Head of caudate nucleus (tissue), 42 donors: ENCODE measurements at regions of chr1 and their contacts with region 1.

Region 1: GRCh38 chr1:179175011-179175841 is 54.3 kb downstream of the ABL2 start:
- DNase-seq: peak in 39 of 42 donors; percentile 6 to 83 (median 58)

Region 2: DNA sequence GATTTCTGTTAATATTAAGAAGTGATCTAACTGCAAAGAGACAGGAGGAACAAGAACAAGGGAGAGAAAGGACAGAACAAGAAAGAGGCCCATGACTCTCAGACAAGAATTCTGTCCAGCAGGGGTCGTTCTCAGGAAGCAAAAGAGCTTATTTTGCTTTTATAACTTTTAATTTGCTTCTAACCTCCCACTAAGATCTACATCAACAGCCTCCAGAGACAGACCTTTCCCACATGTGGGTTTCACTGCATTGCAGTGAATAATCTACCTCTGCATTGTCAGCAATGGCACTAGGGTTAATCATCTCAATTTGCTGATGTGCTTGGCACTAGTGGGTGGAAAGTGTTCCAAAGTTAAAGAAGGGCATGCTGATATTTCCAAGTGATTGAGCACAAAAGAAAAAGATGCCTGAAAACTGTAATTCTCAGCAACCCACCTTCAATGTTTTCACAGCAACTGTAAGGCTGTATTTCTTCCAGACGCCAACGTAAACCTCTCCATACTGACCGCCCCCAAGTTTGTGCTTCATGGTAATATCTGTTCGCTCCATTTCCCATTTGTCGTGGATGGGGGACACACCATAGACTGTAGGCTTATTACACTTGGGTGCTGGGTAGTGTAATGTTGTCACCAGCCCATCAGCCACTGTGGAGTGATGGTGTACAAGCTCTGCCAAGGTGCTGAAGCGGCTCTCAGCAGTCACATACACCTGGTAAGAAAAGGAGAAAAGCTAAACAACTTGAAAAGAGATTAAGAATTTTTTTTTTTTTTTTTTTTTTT is 53.9 kb before region 1 on chr1:
- intact Hi-C with region 1: loop called (anchors 10 kb)
- DNase-seq: peak in 36 of 42 donors; percentile 4 to 83 (median 49)